ENCODE measurements at regions of chr9 and their contacts with region 1.

Region 1: DNA sequence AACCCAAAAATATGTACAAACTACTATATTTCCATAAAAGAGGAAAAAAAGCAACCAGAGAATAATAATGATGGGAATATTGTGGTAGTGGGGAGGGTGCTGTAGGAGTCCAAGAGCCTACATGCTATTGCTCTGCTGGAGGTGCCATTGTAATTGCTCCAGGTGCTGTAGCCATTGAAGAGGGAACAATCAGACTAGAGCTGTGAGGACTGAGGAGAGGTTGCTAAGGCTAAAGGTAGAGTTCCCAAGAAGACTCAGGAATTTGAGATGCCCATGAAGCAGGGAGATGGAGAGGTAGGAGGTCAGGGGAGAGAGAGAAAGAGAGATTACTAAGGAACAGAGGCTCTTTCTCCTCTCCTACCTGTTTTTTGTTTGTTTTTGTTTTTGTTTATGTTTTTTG is 394.0 kb downstream of the DMRTA1 start:
- DNase-seq: no peak
- H3K4me3 ChIP-seq: no peak overlapping the region
- CTCF ChIP-seq: no peak

Region 2: GRCh38 chr9:22718653-22719052 is 122.0 kb before region 1 on chr9:
- in situ Hi-C with region 1: no loop called
- DNase-seq: no peak
- H3K4me3 ChIP-seq: no peak overlapping the region
- CTCF ChIP-seq: no peak

Region 3: DNA sequence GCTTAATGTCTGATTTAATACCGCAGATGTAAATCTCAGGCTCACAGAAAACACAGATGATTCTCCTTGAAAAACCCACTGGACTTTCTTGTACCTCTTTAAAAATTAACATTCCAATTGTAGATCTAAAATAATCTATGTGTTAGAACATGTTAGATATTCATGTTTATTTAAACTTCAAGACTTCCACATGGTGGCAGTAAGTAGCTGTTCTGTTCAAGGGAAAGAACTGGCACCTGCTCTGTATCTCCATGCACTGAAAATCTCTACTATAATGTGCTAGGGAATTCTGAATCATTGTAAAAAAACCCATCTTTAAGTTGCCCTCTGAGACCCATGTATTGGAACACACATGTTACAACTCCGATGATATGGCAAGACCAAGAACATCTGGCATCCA is 27.1 kb before region 1 on chr9:
- in situ Hi-C with region 1: loop called (anchors 5 kb)
- DNase-seq: peak; percentile 1
- H3K4me3 ChIP-seq: no peak overlapping the region
- CTCF ChIP-seq: peak; percentile 36

Region 4: DNA sequence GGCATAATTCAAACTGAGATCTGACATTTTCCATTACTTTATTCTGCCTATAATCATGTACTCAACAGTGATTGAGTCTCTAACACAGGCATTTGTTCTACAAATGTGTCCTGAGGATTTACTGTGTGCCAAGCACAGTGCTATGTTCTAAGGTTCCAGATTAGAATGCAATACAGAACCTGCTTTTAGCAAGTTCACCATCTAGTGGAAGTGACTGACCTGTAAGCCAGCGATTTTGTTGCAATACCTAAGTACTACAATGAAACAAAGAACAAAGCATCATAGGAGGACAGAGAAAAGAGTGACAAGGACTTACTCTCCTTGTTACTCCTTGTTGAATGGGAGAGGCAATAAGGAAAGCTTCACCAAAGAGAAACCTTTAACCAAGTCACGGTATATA is 637.3 kb after region 1 on chr9:
- in situ Hi-C with region 1: loop called (anchors 10 kb)
- DNase-seq: no peak
- H3K4me3 ChIP-seq: no peak overlapping the region
- CTCF ChIP-seq: no peak